Breast epithelium (tissue), 4 donors: ENCODE measurements at regions of chr15 and their contacts with region 1.

Region 1: DNA sequence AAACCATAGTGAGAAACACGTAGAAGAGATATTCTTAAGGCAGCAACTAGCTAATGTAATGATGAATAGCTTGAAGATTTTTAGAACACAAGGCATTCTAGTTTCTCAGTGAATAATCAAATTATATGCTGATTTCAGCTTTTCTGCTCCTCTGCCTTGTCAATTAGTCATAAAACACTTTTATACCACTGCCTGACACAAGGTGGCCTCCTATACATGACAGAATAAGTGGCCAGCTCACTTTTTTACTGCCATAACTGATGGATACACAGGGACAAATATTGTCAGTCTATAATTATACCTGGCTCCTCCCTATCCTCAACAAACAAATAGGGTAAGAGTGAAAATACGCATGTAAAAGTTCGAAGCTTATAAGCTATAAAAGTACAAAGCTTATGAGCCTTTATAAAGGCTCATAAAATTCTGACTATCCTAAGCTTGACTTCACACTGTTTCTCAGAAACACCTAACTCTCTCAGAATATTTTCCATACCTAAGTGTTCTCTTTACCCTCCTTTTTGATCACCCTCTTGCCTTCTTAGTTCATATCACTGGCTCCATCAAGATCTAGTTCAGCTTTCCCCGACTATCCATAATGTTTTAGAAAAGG is 81.6 kb downstream of the HERC1 start:
- DNase-seq: no peak
- H3K4me3 ChIP-seq: no peak overlapping the region
- H3K27ac ChIP-seq: no peak overlapping the region
- H3K4me1 ChIP-seq: no peaks in the 10 kb centered on the region
- H3K27me3 ChIP-seq: no peaks in the 10 kb centered on the region
- CTCF ChIP-seq: peak; percentile 73 to 86 (median 85)
- POLR2A ChIP-seq: no peak

Region 2: DNA sequence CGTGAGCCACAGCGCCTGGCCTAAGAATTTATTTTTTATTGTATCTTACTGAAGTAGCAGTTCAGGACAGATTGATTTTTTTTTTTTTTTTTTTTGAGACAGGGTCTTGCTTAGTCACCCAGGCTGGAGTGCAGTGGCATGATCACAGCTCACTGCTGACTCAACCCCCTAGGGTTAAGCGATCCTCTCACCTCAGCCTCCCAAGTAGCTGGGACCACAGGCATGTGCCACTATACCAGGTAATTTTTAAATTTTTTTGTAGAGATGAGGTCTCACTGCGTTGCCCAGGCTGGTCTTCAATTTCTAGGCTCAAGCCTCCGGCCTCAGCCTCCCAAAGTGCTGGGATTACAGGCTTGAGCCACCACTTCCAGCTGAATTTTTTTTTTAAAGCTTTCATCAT is 181.3 kb after region 1 on chr15:
- intact Hi-C with region 1: no loop called
- DNase-seq: no peak
- H3K4me3 ChIP-seq: no peak overlapping the region
- H3K27ac ChIP-seq: no peak overlapping the region
- H3K4me1 ChIP-seq: peaks cover 0 to 4% of the 10 kb centered on the region in 2 donors
- H3K27me3 ChIP-seq: no peaks in the 10 kb centered on the region
- CTCF ChIP-seq: no peak
- POLR2A ChIP-seq: no peak

Region 3: DNA sequence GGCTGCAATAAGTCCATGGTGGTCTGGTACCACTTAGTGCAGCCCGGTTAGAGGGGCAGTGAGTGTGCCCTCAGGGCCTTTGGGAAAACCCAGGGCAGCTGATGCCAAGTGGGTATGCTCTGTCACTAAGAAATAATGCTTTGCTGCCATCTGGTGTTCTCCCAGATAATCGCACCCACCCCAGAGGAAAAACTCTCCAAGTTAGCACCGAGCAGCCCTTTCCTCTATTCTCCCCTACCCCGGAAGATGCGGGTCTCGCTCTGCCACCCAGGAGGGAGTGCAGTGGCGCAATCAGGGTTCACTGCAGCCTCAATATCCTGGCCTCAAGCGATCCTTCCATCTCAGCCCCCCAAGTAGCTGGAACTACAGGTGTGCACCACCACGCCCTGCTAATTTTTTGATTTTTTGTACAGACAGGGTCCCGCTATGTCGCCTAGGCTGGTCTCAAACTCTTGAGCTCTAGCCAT is 315.4 kb after region 1 on chr15:
- intact Hi-C with region 1: loop called (anchors 5 kb)
- DNase-seq: peak; percentile 37 to 55
- H3K4me3 ChIP-seq: no peak overlapping the region
- H3K27ac ChIP-seq: peak overlapping the region in 1 of 2 donors; percentile 60
- H3K4me1 ChIP-seq: no peaks in the 10 kb centered on the region
- H3K27me3 ChIP-seq: no peaks in the 10 kb centered on the region
- CTCF ChIP-seq: peak; percentile 79 to 90 (median 85)
- POLR2A ChIP-seq: no peak